ENCODE measurements at regions of chr9 and their contacts with region 1.

Region 1: DNA sequence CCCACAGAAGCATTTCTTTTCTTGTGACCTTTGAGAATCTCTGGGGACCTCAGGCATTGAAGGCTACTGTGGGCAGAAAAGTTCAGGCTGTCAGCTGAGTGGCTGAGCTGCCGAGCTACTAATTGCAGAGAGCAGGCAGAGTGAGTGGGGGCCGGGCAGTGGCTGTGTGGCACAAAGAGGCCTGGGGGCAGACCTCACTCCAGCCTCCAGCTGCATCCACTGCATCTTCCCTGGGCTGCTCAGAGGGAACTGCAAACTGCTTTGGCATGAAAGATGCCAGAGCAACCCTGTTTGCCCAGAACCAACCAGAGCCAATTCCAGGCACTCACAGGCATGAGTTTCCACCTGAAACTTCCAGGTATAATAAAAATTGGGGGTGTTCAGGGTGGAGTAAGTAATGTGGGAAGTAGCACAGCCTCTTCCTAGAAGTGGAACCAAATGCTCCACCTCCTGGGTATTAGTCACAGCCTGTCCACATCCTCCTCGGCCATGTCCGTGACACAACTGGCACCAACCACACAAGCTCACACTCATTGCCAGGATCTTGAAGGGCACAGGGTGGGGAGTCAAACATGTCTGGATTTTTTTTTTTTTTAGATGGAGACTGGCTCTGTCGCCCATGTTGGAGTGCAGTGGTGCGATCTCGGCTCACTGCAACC is 548.9 kb downstream of the BNC2 start:
- DNase-seq: peak in 1 of 2 donors; percentile 46
- ATAC-seq: peak in 3 of 4 donors; percentile 55 to 81 (median 70)
- H3K4me3 ChIP-seq: no peak overlapping the region
- H3K27ac ChIP-seq: no peak overlapping the region
- H3K4me1 ChIP-seq: no peaks in the 10 kb centered on the region
- H3K27me3 ChIP-seq: peaks cover 0 to 7% (median 0%) of the 10 kb centered on the region in 3 donors
- CTCF ChIP-seq: no peak

Region 2: DNA sequence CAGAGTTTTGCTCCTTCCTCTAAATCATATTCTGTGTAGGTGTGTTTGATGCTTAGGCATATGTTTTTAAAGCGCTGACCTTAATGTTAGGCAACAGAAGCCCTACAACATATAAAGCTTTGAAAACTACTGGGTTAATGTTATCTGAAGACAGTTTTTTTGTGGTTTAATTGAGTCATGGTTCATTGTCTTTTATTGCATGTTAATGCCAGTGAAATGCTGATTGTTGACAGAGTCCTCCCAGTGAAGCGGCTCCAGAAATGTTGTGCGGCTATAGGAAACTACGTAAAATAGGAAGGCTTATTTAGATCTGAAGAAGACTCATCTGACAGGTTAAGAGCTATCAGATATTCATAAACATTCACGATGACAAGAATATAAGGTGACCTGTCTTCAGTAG is 344.2 kb before region 1 on chr9:
- intact Hi-C with region 1: no loop called
- DNase-seq: no peak
- ATAC-seq: no peak
- H3K4me3 ChIP-seq: no peak overlapping the region
- H3K27ac ChIP-seq: no peak overlapping the region
- H3K4me1 ChIP-seq: no peaks in the 10 kb centered on the region
- H3K27me3 ChIP-seq: no peaks in the 10 kb centered on the region
- CTCF ChIP-seq: no peak

Region 3: GRCh38 chr9:16266648-16267276 is 54.8 kb before region 1 on chr9:
- intact Hi-C with region 1: no loop called
- DNase-seq: no peak
- ATAC-seq: no peak
- H3K4me3 ChIP-seq: no peak overlapping the region
- H3K27ac ChIP-seq: no peak overlapping the region
- H3K4me1 ChIP-seq: peaks cover 6% of the 10 kb centered on the region
- H3K27me3 ChIP-seq: no peaks in the 10 kb centered on the region
- CTCF ChIP-seq: peak; percentile 26

Region 4: DNA sequence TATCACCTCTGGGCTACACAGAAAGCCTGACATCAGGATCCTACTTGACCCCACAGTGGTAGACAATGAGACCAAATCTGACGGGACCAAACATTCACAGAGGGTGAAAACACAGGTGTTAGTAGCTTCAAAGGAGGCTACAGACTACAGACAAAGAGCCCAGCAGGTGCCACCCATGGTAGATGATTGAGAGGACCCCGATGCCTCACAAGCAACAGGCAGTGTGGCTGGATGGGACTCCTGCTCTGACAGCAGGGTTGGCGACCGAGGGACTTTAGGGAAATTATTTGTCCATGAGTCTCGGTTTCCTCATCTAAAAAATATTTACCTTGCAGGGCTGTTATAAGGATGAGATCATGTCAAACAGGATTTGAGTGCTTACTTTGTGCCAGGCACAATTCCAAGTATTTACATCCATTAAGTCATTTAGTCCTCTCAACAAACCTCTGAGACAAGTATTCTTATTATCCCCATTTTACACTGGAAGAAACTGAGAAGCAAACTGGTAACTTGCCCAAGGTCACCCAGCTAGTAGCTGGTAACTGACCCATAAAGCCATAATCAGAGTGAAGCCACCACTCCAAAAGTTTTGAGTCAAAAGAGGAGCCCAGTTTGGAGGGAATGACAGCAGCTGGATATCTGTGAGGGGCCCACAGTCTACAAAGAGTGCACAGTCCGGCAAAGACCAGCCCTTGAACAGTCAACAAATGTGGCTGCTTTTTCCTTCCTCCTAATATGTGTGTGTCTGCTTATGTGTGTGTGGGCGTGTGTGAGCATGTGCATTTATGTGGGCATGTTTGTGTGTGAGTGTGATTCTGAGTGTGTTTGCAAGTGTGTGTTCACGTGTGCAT is 46.9 kb after region 1 on chr9:
- intact Hi-C with region 1: loop called in 1 of 2 experiments (anchors 5 kb)
- DNase-seq: no peak
- ATAC-seq: no peak
- H3K4me3 ChIP-seq: no peak overlapping the region
- H3K27ac ChIP-seq: no peak overlapping the region
- H3K4me1 ChIP-seq: no peaks in the 10 kb centered on the region
- H3K27me3 ChIP-seq: no peaks in the 10 kb centered on the region
- CTCF ChIP-seq: no peak

Region 5: GRCh38 chr9:16396389-16396788 is 74.8 kb after region 1 on chr9:
- intact Hi-C with region 1: no loop called
- DNase-seq: no peak
- ATAC-seq: no peak
- H3K4me3 ChIP-seq: no peak overlapping the region
- H3K27ac ChIP-seq: no peak overlapping the region
- H3K4me1 ChIP-seq: no peaks in the 10 kb centered on the region
- H3K27me3 ChIP-seq: no peaks in the 10 kb centered on the region
- CTCF ChIP-seq: no peak

Region 6: GRCh38 chr9:16689352-16689938 is 367.9 kb after region 1 on chr9:
- intact Hi-C with region 1: no loop called
- DNase-seq: peak in 1 of 2 donors; percentile 61
- ATAC-seq: peak in 3 of 4 donors; percentile 44 to 56 (median 47)
- H3K4me3 ChIP-seq: no peak overlapping the region
- H3K27ac ChIP-seq: peak overlapping the region; percentile 65
- H3K4me1 ChIP-seq: peaks cover 12% of the 10 kb centered on the region
- H3K27me3 ChIP-seq: no peaks in the 10 kb centered on the region
- CTCF ChIP-seq: no peak